AG04449 (cell line): ENCODE measurements at regions of chr1 and their contacts with region 1.

Region 1: DNA sequence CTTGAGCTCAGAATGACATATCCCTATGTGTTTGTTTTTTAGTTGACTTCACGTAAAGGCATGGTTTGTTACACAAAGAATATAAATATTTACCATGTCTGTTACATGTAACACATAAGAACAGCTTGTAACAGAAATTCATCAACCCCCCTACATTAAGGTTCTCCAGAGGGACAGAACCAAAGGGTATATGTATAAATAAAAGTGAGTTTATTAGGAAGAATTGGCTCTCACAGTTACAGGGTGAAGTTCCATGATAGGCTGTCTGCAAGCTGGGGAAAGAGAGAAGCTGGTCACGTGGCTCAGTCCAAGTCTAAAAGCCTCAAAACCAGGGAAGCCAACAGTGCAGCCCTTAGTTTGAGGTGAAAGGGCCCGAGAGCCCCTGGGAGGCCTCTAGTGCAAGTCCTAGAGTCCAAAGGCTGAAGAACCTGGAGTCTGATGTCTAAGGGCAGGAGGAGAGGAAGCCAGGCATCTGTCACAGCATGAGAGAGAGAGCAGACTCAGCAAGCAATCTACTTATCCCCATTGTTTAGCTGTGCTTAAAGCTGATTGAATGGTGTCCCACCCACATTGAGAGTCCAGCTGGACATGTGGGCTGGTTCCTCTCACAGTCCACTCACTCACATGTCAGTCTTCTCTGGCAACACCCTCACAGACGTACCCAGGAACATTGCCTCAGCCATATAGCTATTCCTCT is 15.8 kb downstream of the THRAP3 start:
- DNase-seq: no peak
- H3K4me3 ChIP-seq: no peak overlapping the region
- CTCF ChIP-seq: no peak

Region 2: DNA sequence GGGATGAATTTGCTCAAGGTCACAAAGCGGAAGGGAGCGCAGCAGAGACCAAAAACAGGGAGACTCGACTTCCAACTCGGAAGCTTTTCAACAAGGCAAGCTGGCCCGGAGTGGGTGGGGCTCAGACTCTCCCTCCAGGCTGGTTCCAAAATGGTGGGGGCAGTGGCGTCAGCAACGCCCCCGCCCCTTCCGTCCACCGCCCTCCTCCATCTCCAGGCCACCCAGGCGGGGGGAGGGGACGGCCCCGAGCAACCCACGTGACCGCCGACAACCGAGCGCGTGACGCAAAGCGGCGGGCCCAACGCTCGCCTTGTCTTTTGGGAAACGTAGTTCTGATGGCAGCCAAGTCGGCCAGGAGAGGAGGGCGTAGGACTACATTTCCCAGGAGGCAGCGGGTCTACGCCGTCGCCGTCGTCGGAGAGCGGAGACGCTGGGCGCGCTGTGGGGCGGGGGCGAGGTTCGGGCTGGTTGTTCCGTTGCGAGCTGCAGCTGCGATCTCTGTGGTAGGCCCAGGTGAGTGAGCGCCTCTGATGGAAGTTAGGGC is 16.0 kb before region 1 on chr1 and contains the start of gene THRAP3:
- CTCF ChIA-PET with region 1: interaction called, 13 read pairs
- POLR2A ChIA-PET with region 1: interaction called, 10 read pairs
- DNase-seq: peak; percentile 95
- H3K4me3 ChIP-seq: peak within 1 kb of the TSS; percentile 85
- CTCF ChIP-seq: no peak